GM12878 (cell line): ENCODE measurements at regions of chr4 and their contacts with region 1.

Region 1: GRCh38 chr4:120718979-120719566 is 203.5 kb downstream of the PRDM5 start:
- DNase-seq: no peak
- ATAC-seq: peak; percentile 89
- H3K4me3 ChIP-seq: no peak overlapping the region
- H3K27ac ChIP-seq: no peak overlapping the region
- H3K4me1 ChIP-seq: no peaks in the 10 kb centered on the region
- H3K27me3 ChIP-seq: peaks cover 0 to under 1% of the 10 kb centered on the region in 2 experiments; a peak in 1 of 4 replicates
- CTCF ChIP-seq: peak; percentile 53 to 66 (median 59); a peak in 5 of 6 replicates
- EP300 ChIP-seq: no peak
- POLR2A ChIP-seq: no peak
- RAD21 ChIP-seq: peak; percentile 61

Region 2: GRCh38 chr4:120071192-120071795 is 647.8 kb before region 1 on chr4:
- CTCF ChIA-PET with region 1: no interaction called
- POLR2A ChIA-PET with region 1: no interaction called
- RAD21 ChIA-PET with region 1: no interaction called
- SMC1A ChIA-PET with region 1: no interaction called
- in situ Hi-C with region 1: no loop called
- intact Hi-C with region 1: loop called (anchors 10 kb)
- DNase-seq: no peak
- ATAC-seq: no peak
- H3K4me3 ChIP-seq: no peak overlapping the region
- H3K27ac ChIP-seq: no peak overlapping the region
- H3K4me1 ChIP-seq: peaks cover 5% of the 10 kb centered on the region
- H3K27me3 ChIP-seq: no peaks in the 10 kb centered on the region
- CTCF ChIP-seq: peak in 2 of 3 experiments; percentile 48 to 58; a peak in 4 of 6 replicates
- EP300 ChIP-seq: no peak
- POLR2A ChIP-seq: no peak
- RAD21 ChIP-seq: peak; percentile 63

Region 3: DNA sequence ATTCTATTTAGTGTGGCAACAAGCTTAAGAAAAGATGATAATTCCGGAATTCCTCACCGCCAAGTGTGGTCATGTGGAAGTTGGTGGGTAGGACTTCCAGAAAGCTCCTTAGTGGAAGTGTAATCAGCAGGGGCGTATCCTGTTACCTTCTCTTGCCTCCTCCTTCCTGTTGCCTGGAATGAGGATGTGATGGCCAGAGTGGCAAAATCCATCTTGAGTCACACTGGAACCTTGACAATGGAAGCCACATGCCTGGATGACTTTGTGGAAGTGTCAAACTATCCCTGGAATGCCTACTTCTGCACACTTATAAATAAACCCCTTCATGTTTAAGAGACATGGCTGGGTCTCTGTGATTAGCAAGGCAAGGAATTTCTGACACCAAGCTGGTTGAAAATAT is 12.5 kb after region 1 on chr4:
- CTCF ChIA-PET with region 1: interaction called, 3 read pairs
- POLR2A ChIA-PET with region 1: no interaction called
- RAD21 ChIA-PET with region 1: no interaction called
- SMC1A ChIA-PET with region 1: interaction called, 11 read pairs
- in situ Hi-C with region 1: no loop called
- intact Hi-C with region 1: no loop called
- DNase-seq: no peak
- ATAC-seq: no peak
- H3K4me3 ChIP-seq: no peak overlapping the region
- H3K27ac ChIP-seq: no peak overlapping the region
- H3K4me1 ChIP-seq: no peaks in the 10 kb centered on the region
- H3K27me3 ChIP-seq: no peaks in the 10 kb centered on the region
- CTCF ChIP-seq: no peak
- EP300 ChIP-seq: no peak
- POLR2A ChIP-seq: no peak
- RAD21 ChIP-seq: no peak

Region 4: GRCh38 chr4:120765260-120765680 is 46.2 kb after region 1 on chr4:
- CTCF ChIA-PET with region 1: interaction called, 4 read pairs
- POLR2A ChIA-PET with region 1: interaction called, 3 read pairs
- RAD21 ChIA-PET with region 1: interaction called, 11 read pairs
- SMC1A ChIA-PET with region 1: interaction called, 9 read pairs
- in situ Hi-C with region 1: no loop called
- intact Hi-C with region 1: no loop called
- DNase-seq: no peak
- ATAC-seq: peak; percentile 18; the same call in 2 of the 3 replicates
- H3K4me3 ChIP-seq: no peak overlapping the region
- H3K27ac ChIP-seq: no peak overlapping the region
- H3K4me1 ChIP-seq: no peaks in the 10 kb centered on the region
- H3K27me3 ChIP-seq: no peaks in the 10 kb centered on the region; a peak in 1 of 4 replicates
- CTCF ChIP-seq: no peak
- EP300 ChIP-seq: no peak
- POLR2A ChIP-seq: no peak
- RAD21 ChIP-seq: no peak

Region 5: GRCh38 chr4:121096629-121097028 is 377.6 kb after region 1 on chr4:
- CTCF ChIA-PET with region 1: no interaction called
- POLR2A ChIA-PET with region 1: no interaction called
- RAD21 ChIA-PET with region 1: no interaction called
- SMC1A ChIA-PET with region 1: no interaction called
- in situ Hi-C with region 1: no loop called
- intact Hi-C with region 1: loop called (anchors 5 kb)
- DNase-seq: no peak
- ATAC-seq: no peak
- H3K4me3 ChIP-seq: no peak overlapping the region
- H3K27ac ChIP-seq: no peak overlapping the region
- H3K4me1 ChIP-seq: no peaks in the 10 kb centered on the region
- H3K27me3 ChIP-seq: no peaks in the 10 kb centered on the region
- CTCF ChIP-seq: peak; percentile 1 to 41 (median 36); a peak in 3 of 6 replicates
- EP300 ChIP-seq: no peak
- POLR2A ChIP-seq: no peak
- RAD21 ChIP-seq: peak; percentile 55